Activated CD4-positive, alpha-beta memory T cell treated with anti-CD3 and anti-CD28 coated beads for 36 hours (primary cell): ENCODE measurements at regions of chr1 and their contacts with region 1.

Region 1: DNA sequence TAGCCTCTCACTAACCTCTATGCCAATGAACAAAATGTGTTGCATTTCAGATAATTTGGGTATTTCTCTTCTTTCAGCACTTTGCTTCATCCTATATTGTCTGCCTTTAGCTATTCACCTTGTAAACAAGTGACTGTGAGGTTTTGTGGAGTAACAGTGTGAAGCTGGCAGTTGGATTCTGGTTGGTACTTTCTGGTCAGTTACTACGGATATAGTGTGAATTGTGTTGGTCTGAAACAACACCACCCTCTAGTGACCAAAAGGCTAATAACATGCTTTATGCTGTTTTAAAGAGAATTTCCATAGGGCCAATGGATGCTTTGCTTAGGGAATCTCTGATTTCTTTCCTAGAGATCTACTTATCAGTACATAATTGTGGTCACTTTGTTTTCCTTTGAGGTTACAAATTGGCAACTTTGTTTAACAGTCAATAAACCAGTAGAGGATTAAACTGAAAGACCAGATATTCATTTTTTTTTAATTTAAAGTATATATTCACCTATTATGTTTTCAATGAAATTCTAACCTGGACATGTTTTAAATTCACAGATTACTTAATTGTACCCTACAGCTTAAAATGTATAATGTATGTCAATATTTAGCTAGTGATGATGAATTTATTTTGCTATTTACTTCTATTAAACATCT is 2.5 kb upstream of the PTGER3 start:
- DNase-seq: no peak
- H3K4me3 Mint-ChIP-seq: no peak overlapping the region
- H3K27ac Mint-ChIP-seq: no peak overlapping the region
- H3K4me1 Mint-ChIP-seq: peaks cover 18% of the 10 kb centered on the region
- H3K27me3 Mint-ChIP-seq: peaks cover 30% of the 10 kb centered on the region

Region 2: DNA sequence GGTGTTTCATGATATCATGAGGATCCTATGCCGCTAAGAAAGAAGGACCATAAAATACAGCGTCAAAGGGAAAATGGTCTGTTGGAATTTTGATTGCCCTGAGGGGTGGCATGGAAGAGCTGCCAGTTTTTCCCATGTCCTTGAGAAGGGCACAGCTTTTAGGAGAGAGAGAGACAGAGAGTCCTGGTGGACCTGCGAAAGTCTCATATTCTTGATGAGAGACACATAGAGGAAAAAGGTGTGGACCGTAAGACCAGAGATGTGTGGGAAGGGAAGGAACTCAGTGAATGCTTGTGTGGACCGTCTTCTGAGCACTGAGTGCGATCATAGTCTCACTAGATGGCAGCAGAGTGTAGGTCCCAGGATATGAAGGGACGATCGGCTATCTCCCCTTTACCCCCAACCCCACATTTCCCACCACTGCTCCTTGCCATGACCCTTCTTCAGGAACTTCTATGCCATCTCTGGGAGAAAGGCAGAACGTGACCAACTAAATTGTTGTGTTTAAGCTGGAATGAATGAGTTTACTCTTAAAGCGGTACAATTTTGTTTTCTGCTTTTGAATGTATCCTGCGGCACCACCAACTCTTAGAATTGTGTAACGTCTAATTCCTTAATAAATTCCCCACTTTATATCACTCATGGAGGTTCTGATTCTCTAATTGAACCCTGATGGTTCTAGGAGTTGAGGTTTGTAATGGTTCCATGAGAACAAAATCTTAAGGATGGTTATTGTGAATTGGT is 521.3 kb before region 1 on chr1:
- CTCF ChIA-PET with region 1: interaction called, 18 read pairs
- POLR2A ChIA-PET with region 1: no interaction called
- intact Hi-C with region 1: loop called (anchors 1 kb)
- DNase-seq: no peak
- H3K4me3 Mint-ChIP-seq: no peak overlapping the region
- H3K27ac Mint-ChIP-seq: no peak overlapping the region
- H3K4me1 Mint-ChIP-seq: peaks cover 2% of the 10 kb centered on the region
- H3K27me3 Mint-ChIP-seq: peaks cover 8% of the 10 kb centered on the region

Region 3: DNA sequence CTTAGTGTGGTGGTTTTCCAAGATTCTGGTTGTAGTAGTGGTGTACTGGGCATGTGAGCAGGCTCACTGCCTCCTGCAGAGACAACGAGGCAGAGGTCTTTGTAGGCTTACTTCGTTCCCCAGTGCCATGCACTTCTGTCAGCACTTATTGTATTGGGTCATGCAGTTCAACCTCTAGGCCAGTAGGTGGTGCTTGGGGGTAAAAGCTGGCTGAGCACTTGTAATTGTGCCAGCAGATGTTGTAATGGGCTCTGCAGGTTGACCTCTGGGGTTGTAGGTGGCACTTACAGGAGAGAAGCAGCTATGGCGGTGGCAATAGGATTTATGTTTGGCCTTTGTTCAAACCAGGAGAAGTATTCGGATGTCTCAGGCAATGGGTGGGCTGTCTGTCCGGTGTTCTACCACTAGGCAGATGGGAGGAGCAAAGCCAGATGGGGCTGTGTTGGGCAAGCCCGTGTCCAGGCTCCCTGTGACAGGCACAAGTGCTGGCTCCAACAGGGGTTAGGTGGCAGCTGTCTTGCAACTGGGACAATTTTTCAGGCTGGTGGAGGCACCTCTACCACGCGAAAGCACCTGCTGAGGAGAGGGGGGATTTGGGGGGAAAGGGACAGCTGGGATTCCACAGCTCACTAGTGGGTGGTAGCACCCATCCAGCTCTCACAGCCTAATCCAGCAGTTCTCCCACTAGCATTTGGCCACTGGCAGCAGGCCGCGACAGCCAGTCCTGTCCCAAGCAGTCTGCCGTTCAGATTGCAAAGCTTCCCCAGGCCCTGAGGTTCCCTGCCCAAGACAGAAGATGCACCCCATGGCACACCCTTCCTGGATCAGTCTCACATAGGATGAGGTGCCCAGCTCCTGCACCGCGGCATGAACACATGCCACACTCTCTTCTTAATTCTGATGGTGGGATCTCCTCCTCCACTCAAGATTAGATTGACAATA is 364.5 kb before region 1 on chr1:
- CTCF ChIA-PET with region 1: interaction called, 24 read pairs
- POLR2A ChIA-PET with region 1: no interaction called
- intact Hi-C with region 1: loop called (anchors 1 kb)
- DNase-seq: peak; percentile 45
- H3K4me3 Mint-ChIP-seq: no peak overlapping the region
- H3K27ac Mint-ChIP-seq: no peak overlapping the region
- H3K4me1 Mint-ChIP-seq: no peaks in the 10 kb centered on the region
- H3K27me3 Mint-ChIP-seq: peaks cover 2% of the 10 kb centered on the region